Activated naive CD4-positive, alpha-beta T cell treated with anti-CD3 and anti-CD28 coated beads for 36 hours (primary cell): ENCODE measurements at regions of chr11 and their contacts with region 1.

Region 1: DNA sequence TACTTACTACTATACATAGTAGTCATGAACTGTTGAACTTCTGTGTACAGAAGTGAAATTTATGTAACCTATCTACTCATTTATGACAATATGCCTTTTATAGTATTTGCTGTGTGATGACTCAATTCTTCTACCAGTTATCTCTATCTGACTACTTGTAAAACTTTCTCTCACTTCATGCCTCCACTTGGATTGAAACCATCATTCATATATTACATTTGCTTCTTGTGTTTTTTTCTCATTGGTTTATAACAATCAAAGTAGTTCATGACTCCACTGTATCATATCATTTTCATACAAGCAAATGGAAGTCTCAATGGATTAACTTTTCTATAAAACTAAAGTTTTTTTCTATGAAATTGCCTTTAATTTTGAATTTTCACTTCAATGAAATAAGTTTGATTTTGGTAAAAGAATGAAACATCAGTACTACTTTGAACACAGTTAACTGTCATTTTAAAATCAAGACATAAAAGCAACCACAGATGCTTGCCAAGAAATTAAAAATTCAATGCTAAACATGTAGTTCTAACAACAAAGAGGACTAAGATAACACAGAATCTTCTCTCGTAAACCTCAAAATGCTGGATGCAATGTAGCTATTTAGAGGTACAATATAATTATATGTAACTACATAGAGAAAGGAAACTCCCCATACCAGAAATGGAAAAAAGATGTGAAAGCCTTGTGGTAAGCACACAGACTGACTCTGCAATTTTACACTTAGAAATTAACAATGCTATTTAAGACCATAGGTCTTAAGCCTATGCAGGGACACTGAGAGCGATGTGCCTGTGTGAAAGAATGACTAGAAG is 27.6 kb upstream of the EXPH5 start:
- DNase-seq: no peak
- H3K4me3 Mint-ChIP-seq: no peak overlapping the region
- H3K27ac Mint-ChIP-seq: no peak overlapping the region
- H3K4me1 Mint-ChIP-seq: peaks cover 24% of the 10 kb centered on the region
- H3K27me3 Mint-ChIP-seq: peaks cover 10% of the 10 kb centered on the region

Region 2: GRCh38 chr11:107840129-107840484 is 781.1 kb before region 1 on chr11:
- CTCF ChIA-PET with region 1: no interaction called
- intact Hi-C with region 1: loop called (anchors 10 kb)
- DNase-seq: no peak
- H3K4me3 Mint-ChIP-seq: no peak overlapping the region
- H3K27ac Mint-ChIP-seq: peak overlapping the region; percentile 93
- H3K4me1 Mint-ChIP-seq: peaks cover 68% of the 10 kb centered on the region
- H3K27me3 Mint-ChIP-seq: no peaks in the 10 kb centered on the region

Region 3: DNA sequence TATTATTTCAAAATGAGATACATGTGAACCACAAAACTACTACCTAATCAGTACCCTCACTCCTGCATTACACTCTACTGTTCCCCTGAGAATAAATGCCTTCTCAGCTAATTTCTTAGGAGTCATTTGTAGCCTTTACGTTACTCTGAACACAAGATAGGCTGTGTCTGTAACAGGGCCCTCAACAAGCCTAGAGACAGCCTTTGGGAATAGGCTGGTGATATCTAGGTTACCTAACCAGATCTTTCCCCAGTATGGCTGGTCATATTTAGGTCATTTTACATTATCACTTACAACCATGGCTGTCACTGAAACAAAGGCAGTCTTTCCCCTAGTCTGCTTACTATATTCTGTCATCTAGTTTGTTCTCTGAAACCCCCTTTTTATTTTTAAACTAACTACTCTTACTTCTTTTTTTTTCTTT is 384.1 kb before region 1 on chr11:
- CTCF ChIA-PET with region 1: no interaction called
- intact Hi-C with region 1: loop called (anchors 1 kb)
- DNase-seq: no peak
- H3K4me3 Mint-ChIP-seq: peak overlapping the region; percentile 64
- H3K27ac Mint-ChIP-seq: peak overlapping the region; percentile 91
- H3K4me1 Mint-ChIP-seq: peaks cover 75% of the 10 kb centered on the region
- H3K27me3 Mint-ChIP-seq: no peaks in the 10 kb centered on the region

Region 4: GRCh38 chr11:108467091-108467823 is 153.9 kb before region 1 on chr11 and contains the start of gene C11orf65:
- CTCF ChIA-PET with region 1: no interaction called
- intact Hi-C with region 1: loop called (anchors 1 kb)
- DNase-seq: peak; percentile 98
- H3K4me3 Mint-ChIP-seq: peak within 1 kb of the TSS; percentile 94
- H3K27ac Mint-ChIP-seq: peak within 1 kb of the TSS; percentile 96
- H3K4me1 Mint-ChIP-seq: peaks cover 8% of the 10 kb centered on the region
- H3K27me3 Mint-ChIP-seq: no peaks in the 10 kb centered on the region
- total RNA-seq, gene C11orf65: 2.2 to 3.1 TPM

Region 5: GRCh38 chr11:108571001-108571400 is 50.2 kb before region 1 on chr11:
- CTCF ChIA-PET with region 1: no interaction called
- intact Hi-C with region 1: no loop called
- DNase-seq: no peak
- H3K4me3 Mint-ChIP-seq: no peak overlapping the region
- H3K27ac Mint-ChIP-seq: no peak overlapping the region
- H3K4me1 Mint-ChIP-seq: no peaks in the 10 kb centered on the region
- H3K27me3 Mint-ChIP-seq: no peaks in the 10 kb centered on the region

Region 6: GRCh38 chr11:108593214-108593922 is 27.8 kb before region 1 on chr11 and contains the start of gene EXPH5:
- CTCF ChIA-PET with region 1: interaction called, 3 read pairs
- intact Hi-C with region 1: loop called (anchors 1 kb)
- DNase-seq: peak; percentile 95
- H3K4me3 Mint-ChIP-seq: peak within 1 kb of the TSS; percentile 88
- H3K27ac Mint-ChIP-seq: peak within 1 kb of the TSS; percentile 54
- H3K4me1 Mint-ChIP-seq: peaks cover 13% of the 10 kb centered on the region
- H3K27me3 Mint-ChIP-seq: peaks cover 3% of the 10 kb centered on the region
- total RNA-seq, gene EXPH5: 2.9 to 3.3 TPM